Transverse colon (tissue), 4 donors: ENCODE measurements at regions of chr13 and their contacts with region 1.

Region 1: DNA sequence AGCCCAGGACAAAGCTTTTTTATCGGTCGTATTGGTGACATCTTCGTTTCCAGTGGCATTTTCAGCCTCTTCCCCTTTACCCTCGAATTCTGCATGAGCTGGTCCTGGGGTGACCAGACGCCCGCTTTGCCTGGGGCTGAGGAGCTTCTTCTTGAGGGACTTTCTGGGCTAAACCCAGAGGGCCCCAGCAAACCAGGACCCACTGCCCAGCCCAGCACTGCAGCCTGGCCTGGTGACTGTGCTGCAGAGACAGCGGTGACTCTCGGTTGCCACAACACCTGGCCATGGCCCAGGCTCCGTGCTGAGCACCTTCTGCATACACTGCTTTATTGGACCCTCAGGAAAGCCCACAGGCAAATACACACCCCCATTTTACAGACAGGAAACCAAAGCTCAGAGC is 21.0 kb downstream of the SPACA7 start:
- DNase-seq: no peak
- H3K4me3 ChIP-seq: no peak overlapping the region
- H3K27ac ChIP-seq: no peak overlapping the region
- H3K4me1 ChIP-seq: no peaks in the 10 kb centered on the region
- H3K27me3 ChIP-seq: no peaks in the 10 kb centered on the region
- CTCF ChIP-seq: no peak
- EP300 ChIP-seq: no peak
- POLR2A ChIP-seq: no peak

Region 2: GRCh38 chr13:110950819-110951570 is 1446.1 kb before region 1 on chr13:
- in situ Hi-C with region 1: loop called in 1 of 4 experiments (anchors 5 kb)
- intact Hi-C with region 1: no loop called
- DNase-seq: no peak
- H3K4me3 ChIP-seq: no peak overlapping the region
- H3K27ac ChIP-seq: no peak overlapping the region
- H3K4me1 ChIP-seq: no peaks in the 10 kb centered on the region
- H3K27me3 ChIP-seq: no peaks in the 10 kb centered on the region
- CTCF ChIP-seq: no peak
- EP300 ChIP-seq: no peak
- POLR2A ChIP-seq: no peak

Region 3: GRCh38 chr13:111531505-111531904 is 865.6 kb before region 1 on chr13:
- in situ Hi-C with region 1: no loop called
- intact Hi-C with region 1: no loop called
- DNase-seq: no peak
- H3K4me3 ChIP-seq: no peak overlapping the region
- H3K27ac ChIP-seq: no peak overlapping the region
- H3K4me1 ChIP-seq: no peaks in the 10 kb centered on the region
- H3K27me3 ChIP-seq: peaks cover 64% of the 10 kb centered on the region
- CTCF ChIP-seq: no peak
- EP300 ChIP-seq: no peak
- POLR2A ChIP-seq: no peak

Region 4: DNA sequence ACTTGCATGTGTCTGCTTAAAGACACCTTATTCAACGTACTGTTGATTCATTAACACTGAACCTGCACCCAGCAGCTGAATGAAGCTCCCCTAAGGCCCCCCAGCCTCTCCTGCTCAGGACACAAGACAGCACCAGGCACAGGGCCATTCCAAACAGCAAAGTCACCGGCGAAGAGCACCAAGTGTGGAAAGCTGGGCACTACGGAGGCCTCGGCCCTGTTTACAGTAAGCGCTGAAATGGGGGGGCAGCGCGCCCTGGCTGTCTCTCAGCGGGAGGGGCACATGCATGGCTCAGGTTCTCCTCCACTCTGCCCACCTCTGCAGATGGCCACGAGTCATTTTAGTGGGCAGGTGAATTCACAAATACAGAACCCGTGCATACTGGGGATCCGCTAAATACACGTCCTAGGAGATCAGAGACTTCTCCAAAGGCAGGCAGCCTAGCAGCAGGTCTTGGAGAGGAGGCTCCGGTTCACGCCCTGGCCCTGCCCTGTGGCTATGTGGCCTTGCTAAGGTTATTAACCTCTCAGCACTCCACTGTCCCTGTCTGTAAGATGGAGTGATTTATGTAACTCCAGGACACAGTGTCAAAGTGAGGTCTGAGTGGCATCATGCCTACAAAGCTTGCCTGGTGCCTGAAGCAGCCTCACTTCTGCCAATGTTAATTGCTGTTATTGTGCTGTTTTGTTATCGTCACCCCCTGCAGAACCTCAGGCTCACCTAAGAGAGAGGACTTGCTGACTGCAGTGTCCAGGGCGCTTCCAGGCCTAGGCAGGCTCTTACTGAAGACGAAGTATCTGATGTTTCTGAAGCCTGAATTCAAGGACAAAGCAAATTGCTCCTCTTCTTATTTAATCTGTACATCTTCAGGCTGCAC is 537.5 kb before region 1 on chr13:
- in situ Hi-C with region 1: no loop called
- intact Hi-C with region 1: no loop called
- DNase-seq: no peak
- H3K4me3 ChIP-seq: no peak overlapping the region
- H3K27ac ChIP-seq: no peak overlapping the region
- H3K4me1 ChIP-seq: no peaks in the 10 kb centered on the region
- H3K27me3 ChIP-seq: no peaks in the 10 kb centered on the region
- CTCF ChIP-seq: no peak
- EP300 ChIP-seq: no peak
- POLR2A ChIP-seq: no peak